Posterior vena cava (tissue), 2 donors: ENCODE measurements at regions of chr19 and their contacts with region 1.

Region 1: GRCh38 chr19:33416307-33417215 is 43.1 kb downstream of the CEBPG start:
- DNase-seq: no peak

Region 2: DNA sequence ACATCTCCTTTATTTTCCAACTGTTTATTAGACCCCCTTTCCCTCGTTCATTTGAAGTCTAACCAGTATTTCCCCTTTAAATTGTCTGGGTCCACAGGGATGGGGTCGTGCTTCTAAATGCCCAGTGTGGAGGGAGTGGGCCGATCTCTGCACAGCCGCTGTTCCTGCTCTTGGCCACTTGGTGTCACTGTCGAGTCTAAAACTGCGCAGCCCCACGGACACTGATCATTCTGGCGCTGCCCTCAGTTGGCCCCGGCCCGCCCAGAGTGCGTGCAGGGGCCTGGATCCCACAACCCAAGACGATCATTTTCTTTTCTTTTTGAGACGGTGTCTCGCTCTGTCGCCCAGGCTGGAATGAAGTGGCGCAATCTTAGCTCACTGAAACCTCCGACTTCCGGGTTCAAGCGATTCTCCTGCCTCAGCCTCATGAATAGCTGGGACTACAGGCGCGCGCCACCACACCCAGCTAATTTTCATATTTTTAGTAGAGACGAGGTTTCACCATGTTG is 272.6 kb before region 1 on chr19:
- intact Hi-C with region 1: loop called in 1 of 2 experiments (anchors 10 kb)
- DNase-seq: peak; percentile 88

Region 3: DNA sequence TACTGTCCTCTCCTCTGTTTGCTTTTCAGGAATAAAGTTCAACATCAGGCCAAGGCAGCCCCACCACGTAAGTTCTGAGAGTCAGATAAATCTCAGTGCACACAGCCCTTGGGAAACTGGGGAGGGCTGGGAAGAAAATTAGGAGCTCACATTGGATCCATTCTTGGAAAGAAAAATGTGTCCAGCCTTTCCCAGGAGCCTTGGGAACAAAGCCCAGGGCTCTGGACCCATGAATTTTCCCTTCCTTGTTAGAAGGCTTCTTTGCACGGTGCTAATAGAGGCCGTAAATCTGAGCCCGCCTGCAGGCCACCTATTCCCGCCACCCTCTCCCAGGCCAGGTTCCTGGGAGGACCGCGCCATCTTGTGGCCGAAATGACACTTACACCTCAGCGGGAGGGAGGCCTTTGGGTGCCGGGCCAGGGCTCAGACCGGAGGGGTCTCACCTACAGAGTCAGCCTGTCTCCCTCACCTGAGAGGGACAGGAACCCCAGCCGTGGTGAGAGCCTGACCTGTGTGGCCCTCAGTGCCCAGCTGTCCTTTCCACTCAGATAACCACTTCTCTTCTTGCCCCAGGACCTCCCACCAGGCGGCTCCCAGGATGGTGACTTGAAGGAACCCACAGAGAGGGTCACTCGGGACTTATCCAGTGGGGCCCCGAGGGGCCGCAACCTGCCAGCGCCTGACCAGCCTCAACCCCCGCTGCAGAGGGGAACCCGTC is 355.0 kb after region 1 on chr19:
- intact Hi-C with region 1: loop called (anchors 5 kb)
- DNase-seq: peak; percentile 89